Natural killer cell (primary cell): ENCODE measurements at regions of chr9 and their contacts with region 1.

Region 1: GRCh38 chr9:124218438-124218982 is 39.2 kb upstream of the NEK6 start:
- DNase-seq: peak; percentile 42 to 49
- ATAC-seq: peak; percentile 37 to 51 (median 38)
- H3K4me3 ChIP-seq: no peak overlapping the region
- H3K4me3 Mint-ChIP-seq: peak overlapping the region; percentile 28
- H3K27ac ChIP-seq: peak overlapping the region; percentile 80
- H3K27ac Mint-ChIP-seq: peak overlapping the region; percentile 43 to 94
- H3K4me1 ChIP-seq: peaks cover 93% of the 10 kb centered on the region
- H3K4me1 Mint-ChIP-seq: peaks cover 69 to 89% of the 10 kb centered on the region in 2 donors
- H3K27me3 ChIP-seq: no peaks in the 10 kb centered on the region
- H3K27me3 Mint-ChIP-seq: no peaks in the 10 kb centered on the region
- CTCF ChIP-seq: no peak

Region 2: DNA sequence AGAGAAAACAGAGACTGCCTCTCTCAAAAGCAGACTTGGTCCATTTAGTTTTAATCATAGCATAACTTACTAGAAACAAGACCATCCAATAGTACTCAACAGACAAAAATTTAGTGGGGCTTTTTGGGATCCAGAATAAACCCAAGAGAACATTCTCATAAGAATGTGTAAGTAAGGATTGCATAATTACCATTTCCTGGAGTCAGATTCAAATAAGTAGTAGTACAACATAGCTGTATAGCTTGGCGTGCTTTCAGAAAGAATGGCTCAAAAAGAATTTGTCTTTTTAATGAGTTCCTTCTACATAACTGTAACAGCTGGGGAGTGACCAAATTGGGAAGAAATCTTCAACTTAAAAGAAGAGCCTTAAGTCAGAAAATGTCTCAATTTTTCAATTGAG is 434.0 kb before region 1 on chr9:
- intact Hi-C with region 1: no loop called
- DNase-seq: no peak
- ATAC-seq: no peak
- H3K4me3 ChIP-seq: no peak overlapping the region
- H3K4me3 Mint-ChIP-seq: no peak overlapping the region
- H3K27ac ChIP-seq: no peak overlapping the region
- H3K27ac Mint-ChIP-seq: no peak overlapping the region
- H3K4me1 ChIP-seq: no peaks in the 10 kb centered on the region
- H3K4me1 Mint-ChIP-seq: no peaks in the 10 kb centered on the region
- H3K27me3 ChIP-seq: no peaks in the 10 kb centered on the region
- H3K27me3 Mint-ChIP-seq: no peaks in the 10 kb centered on the region
- CTCF ChIP-seq: no peak

Region 3: GRCh38 chr9:124257844-124258606 is 39.5 kb after region 1 on chr9 and contains the start of gene NEK6:
- intact Hi-C with region 1: loop called (anchors 5 kb)
- DNase-seq: peak; percentile 56 to 62
- ATAC-seq: peak; percentile 79 to 82 (median 80)
- H3K4me3 ChIP-seq: peak within 1 kb of the TSS; percentile 94
- H3K4me3 Mint-ChIP-seq: peak within 1 kb of the TSS; percentile 98
- H3K27ac ChIP-seq: peak within 1 kb of the TSS; percentile 43
- H3K27ac Mint-ChIP-seq: peak within 1 kb of the TSS; percentile 81 to 94
- H3K4me1 ChIP-seq: peaks cover 53% of the 10 kb centered on the region
- H3K4me1 Mint-ChIP-seq: peaks cover 44 to 65% of the 10 kb centered on the region in 2 donors
- H3K27me3 ChIP-seq: no peaks in the 10 kb centered on the region
- H3K27me3 Mint-ChIP-seq: no peaks in the 10 kb centered on the region
- CTCF ChIP-seq: no peak
- total RNA-seq, gene NEK6: 25.0 to 34.9 (median 33.0) TPM

Region 4: DNA sequence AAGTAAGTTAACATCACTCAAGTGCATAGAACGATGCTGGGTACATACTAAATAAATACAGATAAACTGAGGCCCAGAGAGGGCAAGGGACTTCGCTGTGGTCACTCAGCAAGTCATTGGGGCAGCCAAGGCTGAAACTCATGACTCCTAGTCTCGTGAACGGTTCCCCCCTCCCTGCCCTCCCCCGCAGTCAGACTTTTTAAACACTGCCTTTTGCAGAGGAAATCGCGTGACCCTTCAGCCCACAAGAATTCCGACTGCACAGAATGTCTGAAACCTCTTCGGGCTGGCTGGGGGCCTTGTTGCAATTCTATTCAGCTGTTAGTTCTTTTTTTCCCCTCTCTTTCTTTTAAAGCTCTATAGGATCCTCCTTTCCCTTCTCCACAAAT is 67.4 kb after region 1 on chr9:
- intact Hi-C with region 1: loop called (anchors 5 kb)
- DNase-seq: peak; percentile 40 to 61
- ATAC-seq: peak; percentile 56 to 78 (median 69)
- H3K4me3 ChIP-seq: no peak overlapping the region
- H3K4me3 Mint-ChIP-seq: peak overlapping the region; percentile 87
- H3K27ac ChIP-seq: peak overlapping the region; percentile 66
- H3K27ac Mint-ChIP-seq: peak overlapping the region; percentile 93 to 99
- H3K4me1 ChIP-seq: peaks cover 66% of the 10 kb centered on the region
- H3K4me1 Mint-ChIP-seq: peaks cover 45 to 57% of the 10 kb centered on the region in 2 donors
- H3K27me3 ChIP-seq: no peaks in the 10 kb centered on the region
- H3K27me3 Mint-ChIP-seq: no peaks in the 10 kb centered on the region
- CTCF ChIP-seq: no peak